Naive thymus-derived CD4-positive, alpha-beta T cell (primary cell): ENCODE measurements at regions of chr21 and their contacts with region 1.

Region 1: GRCh38 chr21:14675774-14676530 is 129.8 kb upstream of the SAMSN1 start:
- DNase-seq: peak in 7 of 9 donors; percentile 52 to 78 (median 70)
- ATAC-seq: peak; percentile 90
- H3K4me3 ChIP-seq: peak overlapping the region; percentile 19
- H3K4me3 Mint-ChIP-seq: peak overlapping the region; percentile 12 to 82 (median 78)
- H3K27ac ChIP-seq: peak overlapping the region; percentile 68
- H3K27ac Mint-ChIP-seq: peak overlapping the region; percentile 94 to 100 (median 98)
- H3K4me1 ChIP-seq: peaks cover 21 to 28% of the 10 kb centered on the region in 2 donors
- H3K4me1 Mint-ChIP-seq: peaks cover 32 to 68% (median 60%) of the 10 kb centered on the region in 7 donors
- H3K27me3 ChIP-seq: no peaks in the 10 kb centered on the region
- H3K27me3 Mint-ChIP-seq: no peaks in the 10 kb centered on the region

Region 2: DNA sequence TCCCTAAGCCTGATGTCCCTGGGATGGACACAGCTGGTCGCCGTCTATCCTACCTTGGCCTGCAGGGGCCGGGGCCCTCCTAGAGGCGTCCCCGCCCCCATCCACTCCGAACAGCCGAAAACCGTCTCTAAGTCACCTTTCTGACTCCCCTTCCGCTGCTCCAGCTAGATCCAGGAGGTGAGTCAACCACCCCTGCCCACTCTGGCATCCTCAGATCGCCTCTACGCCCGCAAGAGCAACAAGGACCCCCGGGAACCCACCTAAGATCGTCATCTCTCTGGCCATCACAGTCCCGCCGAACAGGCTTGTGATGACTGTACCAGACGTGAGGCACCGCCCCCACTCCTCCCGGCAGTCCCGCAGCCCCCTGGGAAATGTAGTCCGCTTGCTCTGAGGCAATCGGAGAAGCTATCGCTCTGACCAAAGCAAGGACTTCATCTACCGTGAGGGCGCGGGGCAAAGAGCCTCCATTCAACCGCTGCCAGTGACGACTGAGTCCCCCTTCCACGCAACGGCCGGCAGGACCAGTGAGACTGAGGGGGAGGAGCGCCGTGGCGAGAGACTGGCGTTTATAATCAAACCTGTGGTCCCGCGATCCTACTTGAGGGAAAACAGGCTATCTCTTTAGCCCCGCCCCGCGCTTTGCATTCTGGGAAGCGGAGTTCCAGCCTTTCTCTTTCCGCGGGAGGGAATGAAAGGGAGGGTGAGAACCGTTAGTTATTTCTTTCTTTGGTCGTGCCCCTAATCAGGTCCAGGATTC is 292.9 kb before region 1 on chr21 and contains the start of gene HSPA13:
- CTCF ChIA-PET with region 1: no interaction called
- POLR2A ChIA-PET with region 1: interaction called, 7 read pairs
- intact Hi-C with region 1: loop called (anchors 1 to 5 kb)
- DNase-seq: peak; percentile 88 to 99 (median 99)
- ATAC-seq: peak; percentile 97
- H3K4me3 ChIP-seq: peak within 1 kb of the TSS; percentile 93
- H3K4me3 Mint-ChIP-seq: peak within 1 kb of the TSS; percentile 93 to 100 (median 100)
- H3K27ac ChIP-seq: peak within 1 kb of the TSS; percentile 91
- H3K27ac Mint-ChIP-seq: peak within 1 kb of the TSS; percentile 93 to 100 (median 98)
- H3K4me1 ChIP-seq: peaks cover 8 to 25% of the 10 kb centered on the region in 2 donors
- H3K4me1 Mint-ChIP-seq: peaks cover 13 to 44% (median 41%) of the 10 kb centered on the region in 7 donors
- H3K27me3 ChIP-seq: no peaks in the 10 kb centered on the region
- H3K27me3 Mint-ChIP-seq: peaks cover 0 to 2% (median 0%) of the 10 kb centered on the region in 5 donors
- total RNA-seq, gene HSPA13: 16.9 to 38.1 (median 26.7) TPM

Region 3: DNA sequence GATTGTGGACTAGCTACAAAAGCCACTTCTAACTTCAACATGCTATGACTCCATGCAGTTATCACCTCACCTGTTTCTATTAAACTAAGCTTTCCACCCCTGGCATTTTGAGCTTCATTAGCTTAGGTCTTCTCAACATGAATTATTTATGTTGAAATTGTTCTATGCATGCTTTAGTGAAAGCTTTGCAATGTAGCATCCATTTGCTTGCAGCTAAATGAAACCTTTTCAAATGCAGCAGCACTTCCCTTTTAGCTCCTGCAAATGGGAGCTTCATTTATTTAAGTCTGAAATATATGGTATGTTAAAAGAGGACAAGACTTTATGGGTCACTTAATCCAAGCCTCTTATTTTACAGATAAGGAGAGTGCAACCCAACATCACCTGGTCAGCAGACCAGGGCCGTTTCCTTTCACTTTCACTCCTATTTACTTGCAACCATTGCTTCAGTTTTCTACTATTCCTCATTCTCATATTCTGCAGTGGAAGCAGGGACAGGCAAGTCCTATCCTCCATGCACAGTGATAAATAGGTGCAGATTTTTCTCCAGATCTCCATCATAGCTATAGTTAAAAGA is 73.5 kb before region 1 on chr21:
- CTCF ChIA-PET with region 1: no interaction called
- POLR2A ChIA-PET with region 1: no interaction called
- intact Hi-C with region 1: loop called in 1 of 2 experiments (anchors 5 kb)
- DNase-seq: no peak
- ATAC-seq: no peak
- H3K4me3 ChIP-seq: peak overlapping the region; percentile 46
- H3K4me3 Mint-ChIP-seq: peak overlapping the region; percentile 11 to 82 (median 62)
- H3K27ac ChIP-seq: no peak overlapping the region
- H3K27ac Mint-ChIP-seq: peak overlapping the region in 7 of 9 donors; percentile 3 to 80 (median 58)
- H3K4me1 ChIP-seq: peaks cover 10 to 11% of the 10 kb centered on the region in 2 donors
- H3K4me1 Mint-ChIP-seq: peaks cover 14 to 48% (median 27%) of the 10 kb centered on the region in 7 donors
- H3K27me3 ChIP-seq: no peaks in the 10 kb centered on the region
- H3K27me3 Mint-ChIP-seq: no peaks in the 10 kb centered on the region

Region 4: DNA sequence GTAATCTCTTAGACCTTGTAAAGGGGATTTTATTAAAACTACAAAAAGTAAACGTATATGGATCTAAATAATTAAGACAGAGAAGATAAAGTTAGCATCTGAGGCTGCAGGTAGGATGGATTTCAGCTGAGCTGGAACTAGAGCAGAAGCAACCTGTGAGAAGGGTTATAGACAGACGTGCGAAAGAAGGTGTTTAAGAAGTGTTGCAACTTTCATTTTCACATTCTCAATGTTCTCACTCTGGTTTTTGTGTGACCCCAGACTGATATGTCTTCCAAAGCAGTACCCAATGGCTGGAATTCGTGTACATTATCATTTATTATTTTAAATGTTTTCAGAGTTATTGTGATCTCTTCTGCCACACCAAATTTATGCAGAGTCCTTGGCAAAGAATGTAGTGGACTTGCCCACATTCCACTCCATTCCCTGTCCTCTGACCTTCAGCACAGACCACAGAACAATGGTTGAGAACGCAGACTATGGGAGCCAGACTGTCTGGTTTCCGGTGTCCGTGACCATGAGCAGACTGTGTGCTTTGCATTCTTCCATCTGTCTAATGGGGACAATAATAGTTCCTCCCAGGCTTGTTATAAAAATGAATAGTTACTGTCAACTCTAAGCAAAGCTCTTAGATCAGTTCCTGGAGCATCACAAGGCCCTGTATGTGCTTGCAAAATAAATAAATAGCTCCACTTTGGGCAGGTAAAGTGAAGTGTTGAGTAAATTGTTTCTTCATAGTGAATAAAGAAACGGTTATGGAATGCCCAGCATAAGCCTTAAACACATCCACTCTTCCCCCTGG is 10.7 kb after region 1 on chr21:
- CTCF ChIA-PET with region 1: interaction called, 3 read pairs
- POLR2A ChIA-PET with region 1: interaction called, 7 read pairs
- intact Hi-C with region 1: loop called (anchors 1 kb)
- DNase-seq: no peak
- ATAC-seq: peak; percentile 9
- H3K4me3 ChIP-seq: peak overlapping the region; percentile 22
- H3K4me3 Mint-ChIP-seq: peak overlapping the region in 8 of 10 donors; percentile 40 to 68 (median 56)
- H3K27ac ChIP-seq: no peak overlapping the region
- H3K27ac Mint-ChIP-seq: peak overlapping the region in 5 of 9 donors; percentile 33 to 68 (median 44)
- H3K4me1 ChIP-seq: peaks cover 3 to 6% of the 10 kb centered on the region in 2 donors
- H3K4me1 Mint-ChIP-seq: peaks cover 17 to 44% (median 36%) of the 10 kb centered on the region in 7 donors
- H3K27me3 ChIP-seq: no peaks in the 10 kb centered on the region
- H3K27me3 Mint-ChIP-seq: peaks cover 0 to 4% (median 0%) of the 10 kb centered on the region in 5 donors

Region 5: DNA sequence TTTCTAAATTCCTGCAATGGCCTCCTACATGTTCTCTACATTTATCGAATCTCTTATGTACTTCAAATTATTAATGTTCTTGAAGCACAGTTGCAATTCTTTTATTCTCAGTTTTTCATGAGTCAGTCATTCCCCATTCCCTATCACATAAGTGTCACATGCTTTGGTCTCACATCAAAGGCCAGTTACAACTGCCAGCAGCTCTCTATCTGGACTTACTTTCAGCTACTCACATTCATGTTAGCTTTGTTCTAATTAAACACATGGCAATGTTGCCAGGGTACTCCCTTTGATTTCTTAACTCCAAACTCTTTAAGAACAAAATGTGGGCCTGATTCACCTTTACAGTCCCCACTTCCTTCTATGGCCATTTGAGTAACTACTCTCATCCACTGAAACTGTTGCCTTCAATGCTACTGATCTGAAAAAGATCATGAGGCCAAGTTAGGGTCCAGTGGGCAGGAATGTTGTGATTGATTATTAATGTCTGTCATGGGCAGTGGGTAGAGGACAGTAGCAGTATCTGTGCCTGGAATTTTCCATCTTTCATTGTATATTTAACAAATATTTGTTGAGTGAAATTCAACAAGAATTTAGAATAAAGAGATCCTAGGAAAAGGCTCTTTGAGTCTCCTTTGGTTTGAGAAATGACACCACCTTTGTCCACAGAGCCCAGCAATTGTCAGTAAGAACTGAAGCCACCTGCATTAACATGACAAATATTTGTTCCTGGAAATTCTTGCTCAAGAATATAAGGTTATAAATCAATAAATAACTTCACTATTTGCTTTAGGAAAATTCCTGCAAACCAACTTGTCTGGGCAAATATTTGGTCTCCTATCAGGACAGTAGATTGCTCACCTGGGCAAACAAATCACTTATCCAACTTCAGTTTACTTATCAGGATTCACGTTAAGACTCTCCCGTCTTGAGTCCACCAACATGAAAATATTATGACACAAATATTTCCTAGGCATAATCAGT is 23.8 kb after region 1 on chr21:
- CTCF ChIA-PET with region 1: no interaction called
- POLR2A ChIA-PET with region 1: no interaction called
- intact Hi-C with region 1: no loop called
- DNase-seq: no peak
- ATAC-seq: no peak
- H3K4me3 ChIP-seq: no peak overlapping the region
- H3K4me3 Mint-ChIP-seq: no peak overlapping the region
- H3K27ac ChIP-seq: no peak overlapping the region
- H3K27ac Mint-ChIP-seq: no peak overlapping the region
- H3K4me1 ChIP-seq: no peaks in the 10 kb centered on the region
- H3K4me1 Mint-ChIP-seq: peaks cover 0 to 2% (median 0%) of the 10 kb centered on the region in 7 donors
- H3K27me3 ChIP-seq: no peaks in the 10 kb centered on the region
- H3K27me3 Mint-ChIP-seq: no peaks in the 10 kb centered on the region

Region 6: GRCh38 chr21:14722841-14723483 is 47.0 kb after region 1 on chr21:
- CTCF ChIA-PET with region 1: no interaction called
- POLR2A ChIA-PET with region 1: interaction called, 6 read pairs
- intact Hi-C with region 1: loop called in 1 of 2 experiments (anchors 5 kb)
- DNase-seq: no peak
- ATAC-seq: no peak
- H3K4me3 ChIP-seq: no peak overlapping the region
- H3K4me3 Mint-ChIP-seq: no peak overlapping the region
- H3K27ac ChIP-seq: no peak overlapping the region
- H3K27ac Mint-ChIP-seq: peak overlapping the region in 1 of 9 donors; percentile 71
- H3K4me1 ChIP-seq: no peaks in the 10 kb centered on the region
- H3K4me1 Mint-ChIP-seq: peaks cover 0 to 31% (median 5%) of the 10 kb centered on the region in 7 donors
- H3K27me3 ChIP-seq: no peaks in the 10 kb centered on the region
- H3K27me3 Mint-ChIP-seq: no peaks in the 10 kb centered on the region

Region 7: DNA sequence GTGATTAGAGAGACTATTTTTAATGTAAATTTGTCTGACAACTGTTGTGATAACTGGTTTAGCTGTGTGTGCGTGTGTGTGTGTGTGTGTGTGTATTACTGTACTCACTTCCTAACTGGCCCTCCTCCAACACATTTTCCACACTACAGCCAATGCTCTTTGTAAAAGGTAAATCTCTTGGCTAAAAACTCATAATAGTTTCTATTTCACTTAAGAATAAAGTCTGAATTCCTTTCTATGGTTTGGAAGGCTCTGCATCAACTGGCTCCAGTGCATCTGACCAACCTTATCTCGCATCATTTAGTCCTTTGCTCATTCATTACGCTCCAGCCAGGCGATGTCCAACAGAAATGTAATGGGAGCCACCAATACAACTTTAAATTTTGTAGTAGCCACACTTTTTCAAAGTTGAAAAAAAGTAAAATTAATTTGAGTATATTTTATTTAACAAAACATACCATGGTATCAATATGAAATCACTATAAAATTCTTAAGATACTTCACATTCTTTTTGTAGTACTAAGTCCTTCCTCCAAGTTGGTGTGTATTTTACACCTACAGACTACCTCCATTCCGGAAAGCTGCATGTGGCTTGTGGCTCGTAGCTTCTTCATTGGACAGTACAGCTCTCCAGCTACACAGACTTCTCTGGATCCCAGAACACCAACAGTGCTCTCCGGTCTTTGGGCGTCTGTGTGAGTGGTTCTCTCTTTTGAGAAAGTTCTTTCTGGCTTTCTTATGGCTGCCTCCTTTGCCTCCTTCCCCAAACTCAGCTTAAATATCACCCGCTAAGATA is 319.9 kb after region 1 on chr21:
- CTCF ChIA-PET with region 1: no interaction called
- POLR2A ChIA-PET with region 1: no interaction called
- intact Hi-C with region 1: no loop called
- DNase-seq: no peak
- ATAC-seq: no peak
- H3K4me3 ChIP-seq: no peak overlapping the region
- H3K4me3 Mint-ChIP-seq: no peak overlapping the region
- H3K27ac ChIP-seq: no peak overlapping the region
- H3K27ac Mint-ChIP-seq: peak overlapping the region in 1 of 9 donors; percentile 13
- H3K4me1 ChIP-seq: no peaks in the 10 kb centered on the region
- H3K4me1 Mint-ChIP-seq: peaks cover 4 to 39% (median 36%) of the 10 kb centered on the region in 7 donors
- H3K27me3 ChIP-seq: no peaks in the 10 kb centered on the region
- H3K27me3 Mint-ChIP-seq: no peaks in the 10 kb centered on the region

Region 8: DNA sequence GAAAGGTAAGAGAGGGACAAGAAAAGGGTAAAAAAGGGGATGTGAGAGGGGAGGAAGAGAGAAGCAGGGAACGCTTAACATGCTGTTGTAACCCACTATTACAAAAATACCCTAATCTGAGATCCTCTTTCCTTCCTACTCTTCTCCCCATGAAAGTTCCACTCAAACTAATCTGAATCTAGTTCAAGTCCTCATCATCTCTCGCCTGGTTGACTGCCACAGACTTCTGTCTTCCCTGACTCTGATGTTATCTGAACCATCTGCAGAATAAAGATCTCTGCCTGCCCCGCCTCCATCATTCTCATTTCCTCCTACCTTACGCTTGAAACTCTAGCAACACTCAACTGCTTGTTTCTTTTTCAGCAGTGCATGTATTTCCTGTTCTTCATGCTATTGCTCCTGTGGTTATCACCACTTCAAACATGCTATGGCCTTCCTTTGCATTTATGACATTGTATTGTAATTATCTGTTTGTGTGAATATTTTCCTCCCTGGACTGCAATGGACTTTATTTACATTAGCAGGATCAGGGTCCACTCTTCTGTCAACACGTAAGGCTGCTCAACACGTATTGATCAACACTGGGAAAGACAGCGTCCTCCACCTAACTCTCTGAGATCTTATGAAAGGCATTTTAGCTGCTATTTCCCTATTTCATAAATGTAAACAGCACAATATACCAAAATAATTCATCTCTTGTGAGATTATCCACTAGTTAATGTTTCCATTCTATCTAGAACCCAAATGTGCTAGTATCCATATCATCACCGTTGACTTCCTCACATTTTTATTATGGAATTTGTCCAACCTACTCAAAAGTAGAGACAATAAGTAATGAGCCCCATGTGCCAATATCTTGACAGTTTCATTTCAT is 838.4 kb after region 1 on chr21:
- CTCF ChIA-PET with region 1: no interaction called
- POLR2A ChIA-PET with region 1: no interaction called
- intact Hi-C with region 1: loop called in 1 of 2 experiments (anchors 2 kb)
- DNase-seq: peak in 8 of 9 donors; percentile 34 to 87 (median 82)
- ATAC-seq: peak; percentile 99
- H3K4me3 ChIP-seq: peak overlapping the region; percentile 23
- H3K4me3 Mint-ChIP-seq: peak overlapping the region; percentile 59 to 76 (median 69)
- H3K27ac ChIP-seq: peak overlapping the region; percentile 46
- H3K27ac Mint-ChIP-seq: peak overlapping the region; percentile 75 to 94 (median 87)
- H3K4me1 ChIP-seq: peaks cover 12 to 32% of the 10 kb centered on the region in 2 donors
- H3K4me1 Mint-ChIP-seq: peaks cover 16 to 54% (median 31%) of the 10 kb centered on the region in 7 donors
- H3K27me3 ChIP-seq: no peaks in the 10 kb centered on the region
- H3K27me3 Mint-ChIP-seq: no peaks in the 10 kb centered on the region